Activated CD4-positive, alpha-beta T cell treated with anti-CD3 and anti-CD28 coated beads for 36 hours (primary cell): ENCODE measurements at regions of chr12 and their contacts with region 1.

Region 1: GRCh38 chr12:69570545-69571399 is 14.5 kb upstream of the CCT2 start:
- DNase-seq: peak; percentile 67
- ATAC-seq: peak; percentile 86
- H3K4me3 Mint-ChIP-seq: no peak overlapping the region
- H3K27ac Mint-ChIP-seq: no peak overlapping the region
- H3K4me1 Mint-ChIP-seq: peaks cover 16% of the 10 kb centered on the region
- H3K27me3 Mint-ChIP-seq: no peaks in the 10 kb centered on the region

Region 2: DNA sequence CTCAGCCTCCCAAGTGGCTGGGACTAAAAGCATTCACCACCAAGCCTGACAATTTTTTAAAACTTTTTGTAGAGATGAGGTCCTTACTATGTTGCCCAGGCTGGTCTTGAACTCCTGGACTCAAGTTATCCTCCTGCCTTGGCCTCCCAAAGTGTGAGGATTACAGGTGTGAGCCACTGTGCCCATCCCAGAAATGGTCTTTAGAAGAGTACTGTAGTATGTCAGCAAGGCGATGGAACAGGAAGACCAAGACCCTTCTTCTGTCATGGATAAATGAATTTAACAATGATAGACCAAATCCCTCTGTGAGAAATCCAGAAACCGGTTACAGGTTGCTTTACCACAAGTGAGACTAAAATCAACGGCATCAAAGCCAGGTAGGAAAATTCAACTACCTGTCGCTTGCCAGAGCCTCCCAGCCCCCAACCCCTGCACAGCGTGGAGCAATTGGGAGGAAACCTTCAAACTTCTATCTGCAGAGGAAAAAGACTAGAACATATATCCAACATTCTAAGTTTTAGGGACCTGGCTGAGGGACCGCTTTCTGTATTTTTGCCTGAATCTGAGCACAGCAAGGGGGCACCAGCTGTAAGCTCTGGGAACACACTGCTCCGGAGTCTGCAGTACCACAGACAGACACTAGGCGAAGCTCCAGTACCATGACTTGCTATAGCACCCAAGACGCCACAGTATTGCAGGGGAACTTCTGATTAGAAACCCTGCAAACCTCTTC is 280.1 kb before region 1 on chr12:
- CTCF ChIA-PET with region 1: interaction called, 33 read pairs
- POLR2A ChIA-PET with region 1: no interaction called
- intact Hi-C with region 1: loop called (anchors 1 to 2 kb)
- DNase-seq: peak; percentile 88
- ATAC-seq: peak; percentile 100
- H3K4me3 Mint-ChIP-seq: no peak overlapping the region
- H3K27ac Mint-ChIP-seq: no peak overlapping the region
- H3K4me1 Mint-ChIP-seq: peaks cover 4% of the 10 kb centered on the region
- H3K27me3 Mint-ChIP-seq: peaks cover 19% of the 10 kb centered on the region

Region 3: GRCh38 chr12:69388371-69388770 is 182.4 kb before region 1 on chr12:
- CTCF ChIA-PET with region 1: interaction called, 18 read pairs
- POLR2A ChIA-PET with region 1: no interaction called
- intact Hi-C with region 1: loop called (anchors 1 kb)
- DNase-seq: no peak
- ATAC-seq: no peak
- H3K4me3 Mint-ChIP-seq: no peak overlapping the region
- H3K27ac Mint-ChIP-seq: no peak overlapping the region
- H3K4me1 Mint-ChIP-seq: peaks cover 29% of the 10 kb centered on the region
- H3K27me3 Mint-ChIP-seq: no peaks in the 10 kb centered on the region

Region 4: GRCh38 chr12:69470189-69471075 is 100.3 kb before region 1 on chr12 and contains the start of gene FRS2:
- CTCF ChIA-PET with region 1: interaction called, 3 read pairs
- POLR2A ChIA-PET with region 1: interaction called, 3 read pairs
- intact Hi-C with region 1: loop called in 1 of 2 experiments (anchors 2 kb)
- DNase-seq: peak; percentile 93
- ATAC-seq: peak; percentile 99
- H3K4me3 Mint-ChIP-seq: peak within 1 kb of the TSS; percentile 92
- H3K27ac Mint-ChIP-seq: peak within 1 kb of the TSS; percentile 99
- H3K4me1 Mint-ChIP-seq: peaks cover 52% of the 10 kb centered on the region
- H3K27me3 Mint-ChIP-seq: no peaks in the 10 kb centered on the region
- total RNA-seq, gene FRS2: 9.5 to 10.4 TPM

Region 5: DNA sequence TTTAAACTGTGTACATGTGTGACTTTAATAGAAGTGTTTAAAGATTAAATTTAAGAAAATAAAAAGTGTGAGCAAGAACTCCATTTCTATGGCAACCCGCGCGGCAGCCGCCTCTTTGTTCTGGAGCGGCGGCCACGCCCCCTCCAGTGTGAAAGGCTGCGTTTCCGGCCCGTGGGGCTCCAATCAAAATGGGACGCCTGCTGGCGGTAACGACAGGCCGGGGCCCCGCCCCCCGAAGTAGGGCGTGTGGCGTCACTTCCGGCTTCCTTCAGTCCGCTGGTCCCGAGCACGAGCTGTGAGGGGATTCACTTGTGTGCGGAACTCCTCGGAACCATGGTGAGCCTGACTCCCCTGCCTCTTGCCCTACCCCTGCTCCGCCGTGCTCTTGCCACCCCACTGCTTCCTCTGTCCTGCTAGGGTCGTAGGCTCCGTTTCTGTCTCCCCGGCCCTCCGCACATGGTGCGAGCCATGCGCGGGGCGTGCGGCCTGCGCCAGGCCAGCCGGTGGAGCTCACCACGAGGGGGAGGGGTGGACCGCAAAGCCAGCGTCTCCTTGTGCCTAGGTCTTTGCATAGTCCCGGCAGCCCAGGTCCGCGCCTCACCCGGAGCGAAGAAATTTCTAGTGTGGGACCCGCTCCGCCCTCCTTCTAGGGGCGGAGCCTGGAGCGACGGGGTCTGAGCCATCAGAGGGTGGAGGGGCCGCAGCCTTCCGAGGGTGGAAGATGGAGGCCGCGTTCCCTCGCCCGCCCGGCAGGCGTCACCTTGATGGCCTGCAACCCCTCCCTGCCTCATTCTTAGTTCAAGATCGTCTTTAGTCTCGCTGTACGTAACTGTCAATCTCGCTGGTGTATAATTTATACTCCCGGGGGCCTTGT is 14.7 kb after region 1 on chr12 and contains the start of gene CCT2:
- CTCF ChIA-PET with region 1: interaction called, 22 read pairs
- POLR2A ChIA-PET with region 1: no interaction called
- intact Hi-C with region 1: no loop called
- DNase-seq: peak; percentile 98
- ATAC-seq: peak; percentile 94
- H3K4me3 Mint-ChIP-seq: peak within 1 kb of the TSS; percentile 96
- H3K27ac Mint-ChIP-seq: peak within 1 kb of the TSS; percentile 95
- H3K4me1 Mint-ChIP-seq: peaks cover 30% of the 10 kb centered on the region
- H3K27me3 Mint-ChIP-seq: no peaks in the 10 kb centered on the region
- total RNA-seq, gene CCT2: 293 to 360 TPM